Vagina (tissue), 2 donors: ENCODE measurements at regions of chr9 and their contacts with region 1.

Region 1: DNA sequence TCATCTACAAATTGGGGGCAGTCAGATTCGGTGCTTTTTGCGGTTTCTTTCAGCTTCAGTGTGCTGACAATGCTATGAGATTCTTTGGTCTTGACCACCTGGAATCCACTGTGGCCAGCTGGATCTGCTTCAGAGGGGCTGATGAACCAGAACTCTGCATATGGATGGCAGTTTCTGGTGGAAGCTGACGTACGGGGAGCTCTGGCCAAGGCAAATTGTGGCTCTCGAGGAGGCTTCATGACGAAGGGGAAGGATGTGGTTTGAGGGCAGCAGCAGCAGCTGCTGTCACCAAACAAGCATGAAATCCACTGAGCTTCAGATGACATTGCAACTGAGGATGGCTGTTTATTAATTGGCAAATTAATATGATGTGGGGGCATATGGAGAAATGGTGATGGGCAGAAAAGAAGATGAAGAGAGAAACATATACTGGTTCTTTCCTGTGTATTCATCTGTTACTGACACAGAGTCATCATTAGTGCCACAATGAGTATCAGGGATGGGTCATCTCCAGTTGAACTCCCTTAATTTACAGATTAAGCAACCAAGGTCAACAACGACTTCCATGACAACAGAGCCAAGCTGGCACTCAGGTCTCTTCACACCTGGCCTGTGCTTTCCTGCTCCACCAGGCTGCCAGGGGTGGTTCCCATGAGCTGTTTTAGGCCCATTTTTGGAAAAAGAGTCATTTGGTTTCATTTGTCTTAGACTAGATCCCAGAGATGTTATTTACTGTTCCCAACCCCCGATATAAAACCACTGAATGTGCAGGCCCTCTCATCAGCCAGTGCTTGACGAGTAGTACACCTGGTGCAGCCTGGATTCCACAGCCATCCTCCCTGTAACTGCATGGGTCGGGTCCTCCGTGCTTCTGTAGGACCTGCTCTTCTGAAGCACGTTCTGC is 134.7 kb downstream of the AOPEP start:
- DNase-seq: no peak
- H3K4me3 ChIP-seq: no peak overlapping the region
- H3K27ac ChIP-seq: peak overlapping the region; percentile 77
- H3K4me1 ChIP-seq: peaks cover 47% of the 10 kb centered on the region
- H3K27me3 ChIP-seq: no peaks in the 10 kb centered on the region
- CTCF ChIP-seq: no peak
- POLR2A ChIP-seq: no peak

Region 2: GRCh38 chr9:94894111-94894699 is 33.0 kb after region 1 on chr9:
- intact Hi-C with region 1: no loop called
- DNase-seq: no peak
- H3K4me3 ChIP-seq: no peak overlapping the region
- H3K27ac ChIP-seq: no peak overlapping the region
- H3K4me1 ChIP-seq: peaks cover 11% of the 10 kb centered on the region
- H3K27me3 ChIP-seq: no peaks in the 10 kb centered on the region
- CTCF ChIP-seq: no peak
- POLR2A ChIP-seq: no peak

Region 3: DNA sequence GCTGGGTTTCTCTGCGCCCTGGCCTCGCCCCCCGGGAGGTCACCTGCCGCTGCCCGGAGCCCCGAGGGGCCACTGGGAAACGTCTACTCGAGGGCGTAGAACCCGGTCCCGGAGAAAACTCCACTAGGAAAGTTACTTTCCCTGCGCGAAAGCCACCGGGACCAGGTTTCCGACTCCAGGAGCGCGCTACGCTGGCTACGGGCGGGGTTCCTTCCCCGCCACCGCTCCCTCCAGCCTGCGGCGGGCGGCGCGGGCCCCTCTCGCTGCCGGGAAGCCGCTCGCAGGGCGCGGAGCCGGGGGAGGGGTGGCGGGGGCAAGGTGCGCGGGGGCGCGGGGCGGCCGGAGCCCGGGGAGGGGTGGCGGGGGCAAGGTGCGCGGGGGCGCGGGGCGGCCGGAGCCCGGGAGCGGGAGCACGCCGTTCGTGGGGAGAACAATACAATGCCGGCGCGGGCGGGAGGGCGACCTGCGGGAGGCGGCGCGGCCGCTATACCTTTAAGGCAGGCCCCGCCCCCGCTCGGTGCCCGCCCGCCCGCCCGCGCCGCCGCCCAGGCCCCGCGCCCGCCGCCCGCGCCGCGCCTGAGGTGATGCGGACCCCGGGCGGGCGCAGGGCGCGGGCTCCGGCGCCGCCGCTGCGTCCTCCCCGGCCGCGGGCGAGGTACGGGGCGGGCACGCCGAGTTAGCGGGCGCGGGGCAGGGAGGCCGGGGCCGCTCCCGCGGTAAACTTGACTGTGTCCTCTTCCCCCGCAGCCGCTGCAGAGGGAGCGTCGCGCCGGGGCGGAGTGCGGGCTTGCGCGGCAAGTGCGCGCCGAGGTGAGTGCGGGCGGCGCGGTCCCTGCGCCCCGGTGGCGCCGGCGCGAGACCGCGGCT is 143.4 kb after region 1 on chr9:
- intact Hi-C with region 1: loop called (anchors 10 kb)
- DNase-seq: no peak
- H3K4me3 ChIP-seq: peak overlapping the region; percentile 90 to 92
- H3K27ac ChIP-seq: peak overlapping the region; percentile 100
- H3K4me1 ChIP-seq: peaks cover 47% of the 10 kb centered on the region
- H3K27me3 ChIP-seq: no peaks in the 10 kb centered on the region
- CTCF ChIP-seq: peak in 1 of 3 experiments; percentile 1
- POLR2A ChIP-seq: no peak

Region 4: GRCh38 chr9:95167998-95168397 is 306.8 kb after region 1 on chr9:
- intact Hi-C with region 1: no loop called
- DNase-seq: no peak
- H3K4me3 ChIP-seq: no peak overlapping the region
- H3K27ac ChIP-seq: no peak overlapping the region
- H3K4me1 ChIP-seq: no peaks in the 10 kb centered on the region
- H3K27me3 ChIP-seq: no peaks in the 10 kb centered on the region
- CTCF ChIP-seq: peak; percentile 31 to 72 (median 53)
- POLR2A ChIP-seq: no peak